ENCODE measurements at regions of chr1 and their contacts with region 1.

Region 1: DNA sequence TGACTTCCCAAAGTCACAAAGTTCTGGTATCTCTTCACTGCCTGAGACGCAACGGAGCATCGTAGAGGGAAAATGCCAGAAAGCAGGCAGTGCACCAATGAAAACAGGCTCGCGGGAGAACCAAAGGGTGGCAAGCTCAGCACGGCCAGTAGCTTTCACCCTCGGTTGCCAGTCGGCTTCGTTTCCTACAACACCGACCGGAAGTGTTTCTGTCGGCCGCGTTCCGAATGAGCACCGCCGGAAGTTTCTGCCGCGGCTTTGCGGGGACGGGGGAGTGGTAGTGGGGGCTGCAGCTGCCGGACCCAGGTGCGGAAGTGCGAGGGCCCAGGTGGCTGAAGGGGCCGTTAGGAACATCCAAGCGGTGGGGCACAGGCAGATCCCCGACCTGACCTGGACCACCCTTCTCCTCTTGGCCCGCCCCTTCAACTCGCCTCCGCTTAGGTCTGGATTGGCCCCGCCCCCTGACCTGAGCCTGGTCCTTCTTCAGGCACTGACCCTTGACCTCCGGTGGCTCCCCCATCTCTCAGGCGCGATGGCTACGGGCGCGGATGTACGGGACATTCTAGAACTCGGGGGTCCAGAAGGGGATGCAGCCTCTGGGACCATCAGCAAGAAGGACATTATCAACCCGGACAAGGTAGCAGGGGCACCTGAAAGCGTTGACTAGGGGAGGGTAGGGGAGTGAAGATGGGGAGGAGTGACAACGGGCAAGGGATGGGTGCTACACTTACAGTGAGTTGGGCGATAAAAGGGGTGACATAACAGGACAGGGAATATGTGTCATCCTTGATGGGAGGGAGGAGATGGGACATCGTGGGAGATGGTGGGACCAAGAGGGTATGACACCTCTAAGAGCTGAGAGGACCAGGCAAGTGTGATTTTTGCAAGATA is at the start of gene DMAP1:
- DNase-seq: peak; percentile 60 to 94
- H3K4me3 ChIP-seq: peak within 1 kb of the TSS; percentile 72 to 89 (median 82)
- H3K27ac ChIP-seq: peak within 1 kb of the TSS; percentile 49; the same call in 1 of the 2 replicates
- H3K4me1 ChIP-seq: peaks cover 0 to 7% (median 2%) of the 10 kb centered on the region in 4 experiments; a peak in 3 of 7 replicates
- H3K27me3 ChIP-seq: peaks cover 0 to 5% (median 2%) of the 10 kb centered on the region in 4 experiments; a peak in 2 of 7 replicates
- CTCF ChIP-seq: peak in 1 of 3 experiments; percentile 20; a peak in 1 of 4 replicates
- EP300 ChIP-seq: peak in 1 of 2 experiments; percentile 74; a peak in 1 of 3 replicates
- POLR2A ChIP-seq: peak in 1 of 2 experiments; percentile 71; a peak in 2 of 3 replicates
- RAD21 ChIP-seq: peak; percentile 37 to 52; a peak in 3 of 4 replicates
- total RNA-seq, gene DMAP1: 36.4 and 37.6 TPM in 2 replicates

Region 2: DNA sequence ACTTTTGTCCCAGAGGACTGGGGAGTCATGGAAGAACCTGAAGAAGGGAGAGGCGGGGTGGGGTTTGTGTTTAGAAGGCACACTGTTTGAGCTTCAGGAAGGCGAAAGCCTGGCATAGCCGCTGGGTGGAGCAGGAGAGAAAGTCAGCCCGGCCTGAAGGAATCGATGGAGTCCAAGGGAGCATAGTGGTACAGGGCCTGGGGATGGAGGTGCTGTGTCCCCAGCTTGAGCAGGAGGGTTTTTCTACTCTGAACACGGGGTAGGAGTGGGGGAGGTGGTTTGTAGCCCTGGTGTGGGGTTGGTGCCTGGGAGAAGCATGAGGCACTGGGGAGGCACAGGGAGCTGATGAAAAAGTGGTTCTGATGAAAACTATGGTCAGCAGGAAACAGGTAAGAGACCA is 226.8 kb before region 1 on chr1:
- CTCF ChIA-PET with region 1: no interaction called
- POLR2A ChIA-PET with region 1: no interaction called
- DNase-seq: no peak
- H3K4me3 ChIP-seq: no peak overlapping the region
- H3K27ac ChIP-seq: no peak overlapping the region
- H3K4me1 ChIP-seq: peaks cover 0 to 5% (median 2%) of the 10 kb centered on the region in 4 experiments; a peak in 3 of 7 replicates
- H3K27me3 ChIP-seq: no peaks in the 10 kb centered on the region
- CTCF ChIP-seq: no peak
- EP300 ChIP-seq: no peak
- POLR2A ChIP-seq: no peak
- RAD21 ChIP-seq: no peak

Region 3: DNA sequence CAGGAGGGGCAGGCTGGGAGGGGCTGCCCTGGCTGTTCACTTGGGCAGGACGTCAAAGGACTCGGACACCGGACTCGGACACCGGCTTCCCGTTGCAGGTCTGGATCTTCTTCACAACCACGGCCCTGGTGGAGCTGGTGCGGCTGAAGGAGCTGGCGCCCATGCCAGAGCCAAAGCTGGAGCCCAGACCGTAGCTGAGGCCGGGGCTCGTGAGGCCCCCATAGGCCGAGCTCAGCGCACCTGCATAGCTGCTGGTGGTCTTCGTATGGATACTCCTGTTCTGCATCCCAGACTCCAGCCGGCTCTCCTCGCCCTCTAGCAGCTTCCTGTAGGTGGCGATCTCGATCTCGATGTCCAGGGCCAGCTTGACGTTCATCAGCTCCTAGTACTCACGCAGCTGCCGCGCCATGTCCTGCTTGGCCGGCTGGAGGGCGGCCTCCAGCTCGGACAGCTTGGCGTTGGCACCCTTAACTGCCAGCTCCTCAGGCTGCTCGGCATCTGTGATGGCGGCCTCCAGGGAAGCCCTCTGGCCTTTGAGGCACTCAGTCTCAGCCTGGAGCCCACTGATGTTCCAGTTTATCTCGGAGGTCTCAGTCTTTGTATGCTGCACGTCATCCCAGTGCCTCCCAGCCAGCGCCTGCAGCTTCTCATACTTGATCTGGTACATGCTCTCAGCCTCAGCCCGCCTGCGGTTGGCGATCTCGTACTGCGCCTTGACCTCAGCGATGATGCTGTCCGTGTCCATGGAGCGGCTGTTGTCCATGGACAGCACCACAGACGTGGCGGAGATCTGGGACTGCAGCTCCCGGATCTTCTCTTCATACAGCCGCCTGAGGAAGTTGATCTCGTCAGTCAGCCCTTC is 110.0 kb before region 1 on chr1:
- CTCF ChIA-PET with region 1: interaction called, 38 read pairs
- POLR2A ChIA-PET with region 1: no interaction called
- DNase-seq: peak in 1 of 2 experiments; percentile 80
- H3K4me3 ChIP-seq: no peak overlapping the region
- H3K27ac ChIP-seq: no peak overlapping the region
- H3K4me1 ChIP-seq: no peaks in the 10 kb centered on the region
- H3K27me3 ChIP-seq: peaks cover 0 to 2% (median 0%) of the 10 kb centered on the region in 4 experiments; a peak in 1 of 7 replicates
- CTCF ChIP-seq: peak; percentile 53 to 63 (median 54)
- EP300 ChIP-seq: no peak
- POLR2A ChIP-seq: no peak
- RAD21 ChIP-seq: peak; percentile 44 to 61

Region 4: GRCh38 chr1:44227211-44227610 is 13.7 kb after region 1 on chr1:
- CTCF ChIA-PET with region 1: interaction called, 191 read pairs
- POLR2A ChIA-PET with region 1: interaction called, 12 read pairs
- DNase-seq: no peak
- H3K4me3 ChIP-seq: no peak overlapping the region
- H3K27ac ChIP-seq: no peak overlapping the region
- H3K4me1 ChIP-seq: no peaks in the 10 kb centered on the region
- H3K27me3 ChIP-seq: no peaks in the 10 kb centered on the region; a peak in 1 of 7 replicates
- CTCF ChIP-seq: no peak
- EP300 ChIP-seq: no peak
- POLR2A ChIP-seq: no peak
- RAD21 ChIP-seq: no peak

Region 5: DNA sequence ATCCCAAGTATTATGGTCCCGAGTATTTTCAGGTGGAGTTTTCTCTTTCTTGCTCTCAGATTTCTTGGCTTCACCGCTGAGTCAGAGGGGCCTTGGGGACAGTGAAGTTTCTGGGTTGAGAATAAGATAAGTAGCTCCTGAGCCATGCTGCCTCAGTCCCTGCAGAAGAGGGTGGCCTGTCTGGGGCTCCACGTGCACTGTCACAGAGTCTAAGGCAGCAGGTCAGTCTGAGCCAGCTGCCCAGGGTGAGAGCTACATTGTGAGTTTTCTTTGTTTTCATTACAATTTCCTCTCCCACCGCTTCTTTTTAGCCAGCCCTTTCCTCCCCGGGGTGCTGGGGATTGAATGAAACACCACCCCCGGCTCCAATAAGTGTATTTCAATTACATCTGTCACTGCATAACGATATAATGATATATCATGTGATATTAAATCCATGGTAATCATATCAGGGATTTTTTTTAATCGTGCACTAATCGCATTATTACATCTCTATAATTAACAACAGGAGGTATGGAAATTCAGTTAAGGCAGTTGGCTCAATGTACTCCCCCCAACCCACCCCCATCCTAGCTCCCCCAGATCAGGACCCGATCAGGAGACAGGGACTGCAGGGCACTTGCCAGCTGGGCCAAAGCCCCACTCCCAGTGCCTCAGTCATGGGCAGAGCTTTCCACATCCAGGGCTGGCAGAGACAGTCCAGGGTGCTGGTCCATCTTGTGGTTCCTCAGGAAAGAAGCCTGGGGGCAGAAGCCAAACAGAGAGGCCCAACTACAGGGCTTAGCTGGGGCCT is 43.5 kb after region 1 on chr1:
- CTCF ChIA-PET with region 1: interaction called, 10 read pairs
- POLR2A ChIA-PET with region 1: interaction called, 3 read pairs
- DNase-seq: no peak
- H3K4me3 ChIP-seq: no peak overlapping the region
- H3K27ac ChIP-seq: no peak overlapping the region
- H3K4me1 ChIP-seq: peaks cover 0 to 11% (median 4%) of the 10 kb centered on the region in 4 experiments; a peak in 4 of 7 replicates
- H3K27me3 ChIP-seq: no peaks in the 10 kb centered on the region
- CTCF ChIP-seq: no peak
- EP300 ChIP-seq: no peak
- POLR2A ChIP-seq: no peak
- RAD21 ChIP-seq: no peak

Region 6: GRCh38 chr1:44294588-44295007 is 81.1 kb after region 1 on chr1:
- CTCF ChIA-PET with region 1: interaction called, 250 read pairs
- POLR2A ChIA-PET with region 1: interaction called, 4 read pairs
- DNase-seq: peak in 1 of 2 experiments; percentile 61
- H3K4me3 ChIP-seq: no peak overlapping the region
- H3K27ac ChIP-seq: no peak overlapping the region
- H3K4me1 ChIP-seq: peaks cover 0 to 2% (median 0%) of the 10 kb centered on the region in 4 experiments; a peak in 1 of 7 replicates
- H3K27me3 ChIP-seq: no peaks in the 10 kb centered on the region
- CTCF ChIP-seq: peak; percentile 81 to 99 (median 89)
- EP300 ChIP-seq: no peak
- POLR2A ChIP-seq: no peak
- RAD21 ChIP-seq: peak; percentile 84 to 87

Region 7: GRCh38 chr1:44594871-44595746 is 381.6 kb after region 1 on chr1:
- CTCF ChIA-PET with region 1: interaction called, 24 read pairs
- POLR2A ChIA-PET with region 1: interaction called, 3 read pairs
- DNase-seq: peak; percentile 39 to 98
- H3K4me3 ChIP-seq: no peak overlapping the region
- H3K27ac ChIP-seq: no peak overlapping the region
- H3K4me1 ChIP-seq: peaks cover 12 to 23% (median 19%) of the 10 kb centered on the region in 4 experiments
- H3K27me3 ChIP-seq: no peaks in the 10 kb centered on the region
- CTCF ChIP-seq: peak; percentile 94 to 98 (median 96)
- EP300 ChIP-seq: no peak
- POLR2A ChIP-seq: no peak
- RAD21 ChIP-seq: peak; percentile 99